ENCODE measurements at regions of chr22 and their contacts with region 1.

Region 1: GRCh38 chr22:42473484-42474193 is 41.4 kb upstream of the NFAM1 start:
- DNase-seq: peak; percentile 44
- CTCF ChIP-seq: peak; percentile 54

Region 2: GRCh38 chr22:42169055-42169469 is 304.6 kb before region 1 on chr22:
- CTCF ChIA-PET with region 1: interaction called, 12 read pairs
- POLR2A ChIA-PET with region 1: no interaction called
- DNase-seq: peak; percentile 86
- CTCF ChIP-seq: peak; percentile 92

Region 3: DNA sequence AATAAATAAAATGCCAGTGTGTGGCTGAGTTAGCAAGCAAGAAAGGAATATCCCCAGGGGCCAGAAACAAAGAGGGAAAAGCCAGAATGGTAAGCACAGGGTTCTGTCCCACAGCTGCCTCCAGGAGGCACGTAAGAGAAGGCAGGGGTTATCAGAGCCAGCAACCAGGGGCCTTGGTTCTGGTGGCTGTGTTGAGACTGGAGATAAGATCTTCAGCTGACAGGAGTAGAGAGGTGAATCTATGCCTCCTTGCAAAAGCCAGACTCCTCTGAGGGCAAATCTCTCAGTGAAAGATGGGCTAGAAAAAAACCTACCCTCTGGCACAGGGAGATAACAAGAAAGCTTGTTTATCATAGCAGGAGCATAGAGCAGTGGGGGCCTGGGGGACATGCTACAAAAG is 11.6 kb before region 1 on chr22:
- CTCF ChIA-PET with region 1: interaction called, 15 read pairs
- POLR2A ChIA-PET with region 1: no interaction called
- DNase-seq: no peak
- CTCF ChIP-seq: no peak

Region 4: GRCh38 chr22:42500161-42500835 is 26.7 kb after region 1 on chr22:
- CTCF ChIA-PET with region 1: no interaction called
- POLR2A ChIA-PET with region 1: no interaction called
- DNase-seq: peak; percentile 100
- CTCF ChIP-seq: no peak

Region 5: DNA sequence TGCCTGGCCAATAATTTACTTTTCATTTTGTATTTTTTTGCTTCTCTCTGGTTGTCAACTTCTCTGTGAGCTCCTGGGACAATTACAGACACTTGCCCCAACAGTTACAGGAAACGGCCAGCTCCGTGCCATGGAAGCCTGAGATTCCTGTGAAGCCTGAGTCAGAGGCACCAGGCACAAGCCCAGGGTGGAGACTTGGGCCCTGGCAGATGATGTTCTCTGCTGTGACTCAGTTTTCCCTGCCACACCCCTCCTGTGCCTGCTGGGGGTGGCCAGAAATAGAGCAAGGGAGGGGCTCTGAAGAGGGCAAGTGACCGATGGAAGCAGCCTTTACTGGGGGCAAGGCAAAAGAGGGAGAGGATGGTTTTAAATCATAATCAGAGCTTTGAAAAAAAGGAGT is 161.9 kb after region 1 on chr22:
- CTCF ChIA-PET with region 1: no interaction called
- POLR2A ChIA-PET with region 1: no interaction called
- DNase-seq: no peak
- CTCF ChIP-seq: no peak

Measured in GM10248 (cell line).